ENCODE measurements at regions of chr16 and their contacts with region 1.

Region 1: GRCh38 chr16:1723450-1724147 is 17.6 kb downstream of the MAPK8IP3 start:
- DNase-seq: no peak
- ATAC-seq: peak; percentile 43
- H3K4me3 ChIP-seq: no peak overlapping the region
- H3K27ac ChIP-seq: peak overlapping the region; percentile 70
- H3K4me1 ChIP-seq: peaks cover 47 to 56% of the 10 kb centered on the region in 2 experiments
- H3K27me3 ChIP-seq: no peaks in the 10 kb centered on the region
- CTCF ChIP-seq: peak; percentile 49 to 82 (median 78); a peak in 5 of 6 replicates
- POLR2A ChIP-seq: no peak
- RAD21 ChIP-seq: peak; percentile 70

Region 2: GRCh38 chr16:1499756-1500464 is 223.7 kb before region 1 on chr16:
- CTCF ChIA-PET with region 1: no interaction called
- POLR2A ChIA-PET with region 1: no interaction called
- RAD21 ChIA-PET with region 1: no interaction called
- intact Hi-C with region 1: no loop called
- DNase-seq: no peak
- ATAC-seq: no peak
- H3K4me3 ChIP-seq: no peak overlapping the region
- H3K27ac ChIP-seq: no peak overlapping the region
- H3K4me1 ChIP-seq: no peaks in the 10 kb centered on the region
- H3K27me3 ChIP-seq: no peaks in the 10 kb centered on the region
- CTCF ChIP-seq: no peak
- POLR2A ChIP-seq: no peak
- RAD21 ChIP-seq: no peak

Region 3: GRCh38 chr16:1705688-1706385 is 17.8 kb before region 1 on chr16 and contains the start of gene MAPK8IP3:
- CTCF ChIA-PET with region 1: interaction called, 11 read pairs
- POLR2A ChIA-PET with region 1: interaction called, 3 read pairs
- RAD21 ChIA-PET with region 1: no interaction called
- intact Hi-C with region 1: no loop called
- DNase-seq: peak; percentile 77
- ATAC-seq: peak; percentile 84
- H3K4me3 ChIP-seq: peak within 1 kb of the TSS; percentile 81 to 96
- H3K27ac ChIP-seq: peak within 1 kb of the TSS; percentile 82
- H3K4me1 ChIP-seq: peaks cover 11 to 20% of the 10 kb centered on the region in 2 experiments
- H3K27me3 ChIP-seq: no peaks in the 10 kb centered on the region
- CTCF ChIP-seq: peak; percentile 35 to 86 (median 73); a peak in 5 of 6 replicates
- POLR2A ChIP-seq: peak; percentile 88
- RAD21 ChIP-seq: peak; percentile 26; the same call in 1 of the 2 replicates
- total RNA-seq, gene MAPK8IP3: 75.3 TPM

Region 4: GRCh38 chr16:1923299-1924034 is 199.9 kb after region 1 on chr16:
- CTCF ChIA-PET with region 1: no interaction called
- POLR2A ChIA-PET with region 1: no interaction called
- RAD21 ChIA-PET with region 1: no interaction called
- intact Hi-C with region 1: no loop called
- DNase-seq: peak; percentile 56
- ATAC-seq: peak; percentile 85
- H3K4me3 ChIP-seq: peak overlapping the region; percentile 16 to 33; a peak in 1 of 4 replicates
- H3K27ac ChIP-seq: peak overlapping the region; percentile 55
- H3K4me1 ChIP-seq: peaks cover 22 to 32% of the 10 kb centered on the region in 2 experiments
- H3K27me3 ChIP-seq: no peaks in the 10 kb centered on the region
- CTCF ChIP-seq: peak in 2 of 3 experiments; percentile 50 to 59; a peak in 5 of 6 replicates
- POLR2A ChIP-seq: no peak
- RAD21 ChIP-seq: no peak